AG04449 (cell line): ENCODE measurements at regions of chr2 and their contacts with region 1.

Region 1: DNA sequence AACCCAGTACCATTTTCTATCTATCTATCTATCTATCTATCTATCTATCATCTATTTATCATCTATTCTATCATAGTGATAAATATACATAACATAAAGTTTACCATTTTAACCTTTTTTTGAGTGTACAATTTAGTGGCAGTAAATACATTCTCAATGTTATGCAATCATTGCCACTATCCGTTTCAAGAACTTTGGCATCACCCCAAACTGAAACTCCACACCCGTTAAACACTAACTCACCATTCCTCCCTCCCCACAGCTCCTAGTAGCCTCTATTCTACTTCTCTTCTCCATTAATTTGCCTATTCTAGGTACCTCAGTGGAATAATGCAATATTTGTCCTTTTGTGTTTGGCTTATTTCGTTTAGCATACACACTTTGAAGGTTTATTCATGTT is 82.5 kb upstream of the KCNE4 start:
- DNase-seq: no peak
- H3K4me3 ChIP-seq: no peak overlapping the region
- CTCF ChIP-seq: no peak

Region 2: GRCh38 chr2:222912117-222912516 is 57.4 kb before region 1 on chr2:
- CTCF ChIA-PET with region 1: interaction called, 21 read pairs
- POLR2A ChIA-PET with region 1: interaction called, 3 read pairs
- DNase-seq: no peak
- H3K4me3 ChIP-seq: no peak overlapping the region
- CTCF ChIP-seq: no peak

Region 3: DNA sequence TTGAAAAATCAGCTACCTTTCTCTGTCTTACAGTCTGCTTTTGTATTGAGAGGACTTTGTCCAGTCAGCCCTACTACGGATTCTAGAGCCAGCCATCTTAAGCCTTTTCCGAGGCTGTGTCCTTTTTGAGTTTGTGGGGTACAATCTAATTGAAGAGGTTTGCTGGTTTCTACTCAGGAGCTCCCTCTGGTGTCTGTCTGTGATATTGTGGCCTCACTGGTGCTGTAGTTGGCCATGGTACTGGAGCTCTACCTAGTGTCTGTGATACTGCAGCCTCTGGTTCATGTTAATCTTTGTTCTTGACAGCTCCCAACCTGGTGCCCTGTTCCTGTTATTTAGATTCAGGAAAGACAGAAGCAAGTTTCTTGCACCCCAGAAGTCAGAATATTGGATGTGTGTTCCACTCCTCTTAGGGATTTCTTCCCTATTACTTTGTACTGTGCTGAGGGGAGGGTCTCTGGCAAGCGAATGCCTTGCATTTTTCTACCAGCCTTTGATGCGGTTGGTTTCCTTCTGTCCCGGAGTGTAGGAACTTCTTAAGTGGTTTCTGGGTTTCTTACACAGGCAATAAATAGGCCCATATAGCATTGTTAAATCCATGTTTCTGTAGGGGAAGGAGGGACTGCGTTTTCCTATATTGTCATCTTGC is 30.2 kb before region 1 on chr2:
- CTCF ChIA-PET with region 1: interaction called, 11 read pairs
- POLR2A ChIA-PET with region 1: no interaction called
- DNase-seq: no peak
- H3K4me3 ChIP-seq: no peak overlapping the region
- CTCF ChIP-seq: peak; percentile 72

Region 4: GRCh38 chr2:222982010-222982908 is 12.8 kb after region 1 on chr2:
- CTCF ChIA-PET with region 1: interaction called, 40 read pairs
- POLR2A ChIA-PET with region 1: no interaction called
- DNase-seq: peak; percentile 71
- H3K4me3 ChIP-seq: no peak overlapping the region
- CTCF ChIP-seq: peak; percentile 75

Region 5: DNA sequence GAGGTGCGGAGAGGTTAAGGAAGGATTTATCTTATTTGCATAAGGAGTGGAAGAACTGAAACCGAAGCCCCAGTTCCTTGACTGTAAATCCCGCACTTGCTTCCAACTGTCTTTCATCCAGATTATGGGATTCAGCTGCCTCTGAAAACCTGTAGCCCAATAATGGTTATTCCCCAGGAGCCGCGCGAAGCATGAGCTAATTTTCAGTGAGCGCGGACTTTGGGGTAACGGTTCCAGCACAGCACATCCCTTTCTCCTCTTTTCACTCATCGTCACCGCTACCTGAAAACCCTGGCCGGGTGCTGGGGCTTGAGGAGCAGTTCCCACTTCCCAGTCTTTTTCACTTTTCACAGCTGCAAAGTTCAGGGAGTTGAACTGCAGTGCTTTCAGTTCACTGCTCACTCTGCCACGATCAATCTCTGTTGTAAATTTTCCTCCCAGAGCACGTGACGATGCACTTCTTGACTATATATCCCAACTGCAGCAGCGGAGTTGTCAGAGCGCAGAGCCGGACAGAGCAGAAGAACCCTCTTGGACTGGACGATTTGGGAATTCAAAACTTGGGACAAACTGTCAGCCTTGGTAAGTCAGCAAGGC is 82.3 kb after region 1 on chr2 and contains the start of gene KCNE4:
- CTCF ChIA-PET with region 1: interaction called, 14 read pairs
- POLR2A ChIA-PET with region 1: interaction called, 3 read pairs
- DNase-seq: no peak
- H3K4me3 ChIP-seq: peak within 1 kb of the TSS; percentile 62
- CTCF ChIP-seq: no peak

Region 6: DNA sequence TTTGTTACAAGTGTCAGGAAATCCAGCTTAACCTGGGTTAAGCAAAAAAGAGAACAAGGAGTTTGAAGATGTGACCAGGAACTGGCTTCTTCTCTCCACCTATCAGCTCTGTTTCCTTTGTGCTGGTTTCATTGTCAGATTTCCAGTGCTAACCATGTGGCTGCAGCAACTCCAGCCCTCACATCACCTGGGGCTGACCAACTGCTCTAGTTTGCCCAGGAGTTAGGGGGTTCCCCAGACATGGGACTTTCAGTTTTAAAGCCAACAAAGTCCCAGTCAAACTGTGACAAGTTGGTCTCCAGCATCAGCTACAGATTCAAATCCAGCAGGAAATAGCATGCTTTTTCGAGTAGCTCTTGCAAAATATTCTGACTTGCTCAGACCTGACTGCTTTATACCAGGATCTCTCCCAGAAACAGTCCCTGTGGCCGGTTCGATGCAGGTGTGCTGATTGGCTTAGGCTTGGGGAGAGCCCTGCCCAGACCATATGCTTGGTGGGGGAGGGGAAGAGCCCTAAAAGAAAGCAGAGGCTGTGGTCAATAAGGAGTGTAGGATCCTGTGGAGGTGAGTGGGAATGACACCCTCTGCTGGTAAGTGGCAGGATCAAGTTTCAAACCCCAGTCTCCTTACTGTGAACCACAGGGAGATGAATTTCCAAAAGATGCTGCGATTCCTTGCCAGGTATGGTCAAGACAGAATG is 132.0 kb after region 1 on chr2:
- CTCF ChIA-PET with region 1: interaction called, 52 read pairs
- POLR2A ChIA-PET with region 1: no interaction called
- DNase-seq: no peak
- H3K4me3 ChIP-seq: no peak overlapping the region
- CTCF ChIP-seq: peak; percentile 56

Region 7: DNA sequence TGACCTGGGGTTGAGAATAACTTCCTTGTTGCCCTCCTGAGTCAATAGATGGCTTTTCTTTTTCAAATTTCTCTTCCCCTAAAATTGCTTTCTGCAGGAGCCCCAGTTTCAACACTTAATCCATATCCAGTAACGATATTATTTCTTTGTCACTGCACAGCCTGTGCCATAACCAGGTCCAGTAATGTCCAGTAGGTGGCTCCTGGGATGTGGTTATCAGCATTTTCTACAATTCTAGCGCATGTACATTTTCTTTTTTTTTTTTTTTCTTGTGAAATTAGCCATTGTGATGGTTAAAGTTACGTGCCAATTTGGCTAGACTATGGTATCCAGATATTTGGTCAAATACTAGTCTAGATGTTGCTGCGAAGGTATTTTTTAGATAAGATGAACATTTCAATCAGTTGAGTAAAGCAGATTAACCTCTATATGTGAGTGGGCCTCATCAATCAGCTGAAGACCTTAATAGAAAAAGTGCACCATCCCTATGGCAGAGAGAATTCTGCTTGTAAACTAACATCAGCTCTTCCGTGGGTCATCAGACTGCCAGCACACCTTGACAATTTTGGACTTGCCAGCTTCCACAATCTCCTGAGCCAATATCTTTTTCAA is 705.6 kb after region 1 on chr2:
- CTCF ChIA-PET with region 1: interaction called, 10 read pairs
- POLR2A ChIA-PET with region 1: no interaction called
- DNase-seq: no peak
- H3K4me3 ChIP-seq: no peak overlapping the region
- CTCF ChIP-seq: peak; percentile 57